HEK293 (cell line): ENCODE measurements at regions of chr12 and their contacts with region 1.

Region 1: DNA sequence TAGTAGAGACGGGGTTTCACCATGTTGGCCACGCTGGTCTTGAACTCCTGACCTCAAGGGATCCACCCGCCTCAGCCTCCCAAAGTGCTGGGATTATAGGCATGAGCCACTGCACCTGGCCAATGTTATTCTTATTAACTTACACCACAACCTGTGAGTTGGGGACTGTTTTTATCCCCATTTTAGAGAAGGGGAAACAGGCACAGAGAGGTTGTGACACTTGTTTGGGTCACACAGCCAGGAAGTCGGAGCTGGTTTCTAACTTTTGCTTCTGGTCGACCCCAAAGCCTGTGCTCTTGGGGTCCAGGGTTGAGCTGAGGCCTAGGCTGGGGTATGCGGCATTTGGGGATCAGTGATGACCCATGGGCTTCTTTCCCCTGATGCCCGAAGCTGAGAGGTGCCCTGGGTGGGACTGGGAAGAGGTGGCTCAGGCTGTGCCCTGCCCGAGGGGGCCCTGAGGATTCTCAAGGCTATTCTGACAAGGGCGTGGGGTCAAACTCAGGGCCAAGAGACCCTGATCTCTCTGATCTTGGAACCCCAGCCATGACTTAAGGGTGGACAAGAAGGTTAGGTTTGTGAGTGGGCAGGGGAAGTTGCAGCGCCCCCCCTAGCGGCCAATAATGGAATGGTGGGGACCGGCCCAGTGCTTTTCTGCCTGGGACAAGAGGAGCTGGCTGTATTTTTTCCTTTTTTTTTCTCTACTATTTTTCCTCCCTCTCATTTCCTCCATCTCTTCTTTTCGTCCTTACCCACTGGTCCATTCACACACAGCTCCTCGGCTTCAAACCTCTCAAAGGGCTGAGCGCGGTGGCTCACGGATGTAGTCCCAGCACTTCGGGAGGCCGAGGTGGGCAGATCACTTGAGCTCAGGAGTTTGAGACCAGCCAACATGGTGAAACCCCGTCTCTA is 3.0 kb downstream of the SDSL start:
- H3K4me3 ChIP-seq: no peak overlapping the region
- H3K27ac ChIP-seq: no peak overlapping the region
- H3K4me1 ChIP-seq: no peaks in the 10 kb centered on the region
- CTCF ChIP-seq: peak; percentile 54

Region 2: DNA sequence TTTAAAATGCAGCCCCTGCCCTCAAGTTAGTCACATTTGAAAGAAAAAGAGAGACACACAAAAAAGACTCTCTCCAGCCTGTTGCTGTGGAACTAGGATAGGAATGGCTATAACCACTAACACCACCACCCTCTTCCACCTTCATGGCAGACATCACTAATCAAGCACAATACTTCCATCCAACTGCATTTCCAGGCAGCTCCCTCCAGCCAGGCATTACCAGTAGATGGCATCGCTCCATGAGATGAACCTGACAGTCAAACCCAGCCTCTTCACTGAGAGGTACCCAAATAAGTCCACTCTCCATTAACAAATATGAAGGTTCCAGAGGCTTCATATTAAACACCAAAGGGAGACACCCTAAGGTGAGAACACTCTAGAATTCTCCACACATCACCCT is 114.7 kb before region 1 on chr12:
- CTCF ChIA-PET with region 1: interaction called, 21 read pairs
- POLR2A ChIA-PET with region 1: no interaction called
- H3K4me3 ChIP-seq: no peak overlapping the region
- H3K27ac ChIP-seq: no peak overlapping the region
- H3K4me1 ChIP-seq: no peaks in the 10 kb centered on the region
- CTCF ChIP-seq: peak; percentile 53

Region 3: GRCh38 chr12:113378291-113378690 is 46.9 kb before region 1 on chr12:
- CTCF ChIA-PET with region 1: interaction called, 12 read pairs
- POLR2A ChIA-PET with region 1: no interaction called
- H3K4me3 ChIP-seq: no peak overlapping the region
- H3K27ac ChIP-seq: no peak overlapping the region
- H3K4me1 ChIP-seq: no peaks in the 10 kb centered on the region
- CTCF ChIP-seq: no peak

Region 4: DNA sequence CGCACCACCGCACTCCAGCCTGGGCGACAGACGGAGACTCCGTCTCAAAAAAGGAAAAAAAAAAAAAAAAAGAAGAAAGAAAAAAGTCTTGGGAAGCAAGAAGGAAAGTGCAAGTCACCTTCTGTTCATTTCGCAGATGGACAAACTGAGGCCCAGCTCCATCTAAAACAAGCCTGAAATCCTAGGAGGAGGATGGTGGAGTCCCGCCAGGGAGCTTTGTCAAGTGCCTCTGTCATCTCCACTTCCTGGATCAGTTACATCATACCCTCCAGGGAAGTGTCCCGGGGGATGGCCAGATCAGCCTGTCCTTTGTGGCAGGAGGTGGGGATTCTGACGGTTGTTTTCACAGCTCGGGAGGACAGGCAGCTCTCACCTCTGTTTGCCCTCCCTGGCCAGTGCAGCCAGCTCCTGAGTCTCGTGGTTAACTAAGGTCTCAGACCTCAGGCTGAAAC is 11.7 kb before region 1 on chr12:
- CTCF ChIA-PET with region 1: interaction called, 19 read pairs
- POLR2A ChIA-PET with region 1: no interaction called
- H3K4me3 ChIP-seq: no peak overlapping the region
- H3K27ac ChIP-seq: no peak overlapping the region
- H3K4me1 ChIP-seq: no peaks in the 10 kb centered on the region
- CTCF ChIP-seq: no peak

Region 5: DNA sequence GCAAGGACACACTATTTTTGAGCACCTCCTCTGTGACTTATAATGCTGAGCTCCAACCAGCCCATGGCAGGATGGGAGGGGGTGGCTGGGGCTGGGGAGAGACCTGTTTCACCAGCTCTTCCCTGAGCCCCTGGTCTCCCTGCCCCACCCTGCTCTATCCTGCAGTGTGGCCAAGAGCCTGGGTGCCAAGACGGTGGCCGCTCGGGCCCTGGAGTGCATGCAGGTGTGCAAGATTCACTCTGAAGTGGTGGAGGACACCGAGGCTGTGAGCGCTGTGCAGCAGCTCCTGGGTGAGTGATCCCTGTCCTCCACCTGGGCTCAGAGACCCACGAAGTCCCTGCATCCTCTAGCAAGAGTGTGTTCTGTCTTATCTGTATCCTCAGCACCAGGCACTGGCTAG is 11.4 kb after region 1 on chr12:
- CTCF ChIA-PET with region 1: interaction called, 17 read pairs
- POLR2A ChIA-PET with region 1: interaction called, 3 read pairs
- H3K4me3 ChIP-seq: no peak overlapping the region
- H3K27ac ChIP-seq: no peak overlapping the region
- H3K4me1 ChIP-seq: no peaks in the 10 kb centered on the region
- CTCF ChIP-seq: no peak

Region 6: GRCh38 chr12:113486722-113487121 is 61.6 kb after region 1 on chr12:
- CTCF ChIA-PET with region 1: no interaction called
- POLR2A ChIA-PET with region 1: no interaction called
- H3K4me3 ChIP-seq: no peak overlapping the region
- H3K27ac ChIP-seq: no peak overlapping the region
- H3K4me1 ChIP-seq: no peaks in the 10 kb centered on the region
- CTCF ChIP-seq: no peak